Pancreas (tissue), 10 donors: ENCODE measurements at regions of chr15 and their contacts with region 1.

Region 1: DNA sequence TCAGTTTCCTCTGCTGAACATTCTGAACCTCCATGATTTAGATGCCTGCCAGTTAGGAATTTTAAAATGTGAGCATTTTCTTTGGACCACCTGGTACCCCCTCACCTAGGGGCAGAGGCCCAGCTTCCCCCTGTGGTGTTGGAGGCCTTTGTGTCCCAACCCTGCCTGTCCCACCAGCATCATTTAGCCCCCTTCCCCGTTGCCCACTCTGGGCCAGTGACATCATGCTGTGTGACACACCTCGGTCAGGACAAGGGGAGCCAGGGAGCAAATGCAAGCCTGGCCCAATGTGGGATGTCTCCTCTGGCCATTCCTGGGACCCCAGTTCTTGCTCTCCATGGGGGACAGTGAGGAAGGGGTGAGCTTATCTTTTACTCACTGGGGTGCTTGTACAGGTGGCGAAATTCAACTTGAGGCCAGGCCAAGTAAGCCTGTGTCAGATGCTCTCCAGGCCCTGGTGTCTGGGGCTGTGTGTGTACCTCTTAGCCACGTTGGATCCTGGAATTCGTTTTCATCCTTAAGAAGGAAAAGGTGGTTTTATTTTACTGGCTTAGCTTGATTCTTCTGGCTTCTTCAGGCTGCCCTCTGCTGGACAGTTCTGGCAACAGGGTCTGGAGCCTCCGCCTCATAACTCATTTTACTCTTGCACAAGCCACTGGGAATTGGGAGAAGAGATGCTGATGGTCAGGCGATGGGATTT is 49.7 kb upstream of the MYZAP start:
- DNase-seq: peak in 4 of 6 donors; percentile 45 to 83 (median 74)
- ATAC-seq: peak; percentile 40 to 78 (median 76)
- H3K4me3 ChIP-seq: no peak overlapping the region
- H3K27ac ChIP-seq: no peak overlapping the region
- H3K4me1 ChIP-seq: peaks cover 0 to 9% (median 6%) of the 10 kb centered on the region in 3 donors
- H3K27me3 ChIP-seq: no peaks in the 10 kb centered on the region
- CTCF ChIP-seq: peak; percentile 45 to 77 (median 68)

Region 2: GRCh38 chr15:57337868-57338411 is 204.0 kb before region 1 on chr15:
- intact Hi-C with region 1: loop called in 2 of 3 experiments (anchors 5 to 10 kb)
- DNase-seq: no peak
- ATAC-seq: peak in 3 of 4 donors; percentile 22 to 38 (median 31)
- H3K4me3 ChIP-seq: no peak overlapping the region
- H3K27ac ChIP-seq: no peak overlapping the region
- H3K4me1 ChIP-seq: no peaks in the 10 kb centered on the region
- H3K27me3 ChIP-seq: no peaks in the 10 kb centered on the region
- CTCF ChIP-seq: no peak